Mucosa of descending colon (tissue), 3 donors: ENCODE measurements at regions of chr10 and their contacts with region 1.

Region 1: GRCh38 chr10:73886085-73886529 is 11.8 kb upstream of the CAMK2G start:
- DNase-seq: peak in 2 of 3 donors; percentile 59 to 74
- ATAC-seq: peak; percentile 88
- H3K4me3 ChIP-seq: no peak overlapping the region
- H3K4me1 ChIP-seq: peaks cover 4% of the 10 kb centered on the region
- CTCF ChIP-seq: peak; percentile 60

Region 2: DNA sequence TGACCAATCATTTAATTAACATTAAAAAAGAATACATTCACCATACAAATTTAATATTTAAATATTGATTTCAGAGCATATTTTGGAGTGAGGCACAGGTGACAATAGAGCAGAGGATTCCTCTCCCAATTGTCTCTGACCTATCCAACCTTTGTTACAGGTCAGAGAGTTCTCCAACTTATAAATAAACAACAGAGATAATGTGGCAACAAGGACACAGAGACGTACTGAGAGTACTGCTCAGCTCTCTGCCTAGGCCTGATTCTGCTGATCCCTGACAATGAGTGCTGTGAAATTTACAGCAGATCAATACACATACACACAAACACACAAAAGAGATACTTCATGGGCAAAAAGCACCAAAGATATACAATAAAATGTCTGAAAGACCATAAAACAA is 169.9 kb before region 1 on chr10:
- intact Hi-C with region 1: no loop called
- DNase-seq: no peak
- ATAC-seq: no peak
- H3K4me3 ChIP-seq: no peak overlapping the region
- H3K4me1 ChIP-seq: no peaks in the 10 kb centered on the region
- CTCF ChIP-seq: no peak

Region 3: GRCh38 chr10:73940634-73941221 is 54.6 kb after region 1 on chr10:
- intact Hi-C with region 1: loop called (anchors 5 kb)
- DNase-seq: peak; percentile 89 to 92 (median 91)
- ATAC-seq: peak; percentile 98
- H3K4me3 ChIP-seq: no peak overlapping the region
- H3K4me1 ChIP-seq: no peaks in the 10 kb centered on the region
- CTCF ChIP-seq: peak; percentile 83

Region 4: DNA sequence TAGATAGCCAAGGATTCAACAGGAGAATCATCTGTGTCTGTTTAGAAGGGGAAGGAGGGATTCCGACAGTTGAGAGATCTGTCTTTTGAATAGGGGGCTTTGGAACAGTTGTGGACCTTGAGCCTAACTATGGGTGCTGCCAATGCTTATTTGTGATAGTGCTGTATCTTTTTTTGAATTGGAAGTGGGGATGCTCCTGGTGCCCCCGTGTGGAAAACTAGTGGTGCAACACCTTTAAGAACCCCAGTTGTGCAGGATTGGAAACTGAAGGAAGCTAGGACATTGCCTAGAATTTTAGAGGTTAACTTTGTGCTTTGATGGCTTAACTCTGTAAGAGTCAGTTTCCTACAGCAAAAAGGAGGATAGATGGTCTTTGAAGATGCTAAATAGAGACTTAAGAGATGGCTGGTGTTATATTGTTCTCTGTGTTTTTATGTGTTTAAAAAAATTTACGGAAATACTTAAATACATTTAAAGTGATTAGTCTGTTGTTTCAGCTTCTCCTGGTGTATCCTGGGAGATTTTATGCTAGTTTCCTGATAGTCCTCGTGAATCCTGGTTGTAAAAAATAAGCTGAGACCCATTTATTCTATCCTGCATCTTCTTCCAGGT is 195.2 kb after region 1 on chr10:
- intact Hi-C with region 1: loop called in 1 of 2 experiments (anchors 5 kb)
- DNase-seq: peak in 1 of 3 donors; percentile 49
- ATAC-seq: peak; percentile 81
- H3K4me3 ChIP-seq: no peak overlapping the region
- H3K4me1 ChIP-seq: no peaks in the 10 kb centered on the region
- CTCF ChIP-seq: peak; percentile 49